A673 (cell line): ENCODE measurements at regions of chr1 and their contacts with region 1.

Region 1: DNA sequence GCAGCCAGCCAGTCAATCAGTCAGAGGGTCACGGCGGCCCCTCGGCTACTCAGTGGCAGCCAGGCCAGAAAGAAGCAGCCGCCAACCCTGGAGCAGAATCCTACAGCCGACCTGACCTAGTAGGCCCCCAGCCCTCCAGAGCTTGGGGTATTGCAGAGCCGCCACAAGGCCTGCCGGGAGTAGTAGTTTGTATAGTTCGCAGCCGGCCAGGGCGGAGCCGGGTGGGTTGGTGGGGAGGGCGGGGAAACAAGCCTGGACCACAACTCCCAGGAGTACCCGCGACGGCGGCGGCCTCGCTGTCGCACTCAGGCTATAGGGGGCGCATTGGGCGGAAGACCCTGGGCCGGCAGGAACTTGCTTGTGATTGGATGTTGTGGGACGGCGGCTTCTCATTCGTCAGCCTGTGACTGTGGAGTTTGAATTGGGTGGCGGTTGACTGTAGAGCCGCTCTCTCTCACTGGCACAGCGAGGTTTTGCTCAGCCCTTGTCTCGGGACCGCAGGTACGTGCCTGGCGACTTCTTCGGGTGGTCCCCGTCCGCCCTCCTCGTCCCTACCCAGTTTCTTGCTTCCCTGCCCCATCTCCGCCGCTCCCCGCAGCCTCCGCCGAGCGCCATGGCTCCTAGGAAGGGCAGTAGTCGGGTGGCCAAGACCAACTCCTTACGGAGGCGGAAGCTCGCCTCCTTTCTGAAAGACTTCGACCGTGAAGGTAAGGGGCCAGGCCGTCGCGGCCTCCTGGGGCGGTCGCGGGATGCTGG is at the start of gene CDCA8:
- DNase-seq: peak; percentile 99
- H3K4me3 ChIP-seq: peak within 1 kb of the TSS; percentile 98
- H3K27ac ChIP-seq: peak within 1 kb of the TSS; percentile 86
- H3K4me1 ChIP-seq: peaks cover 16% of the 10 kb centered on the region
- H3K27me3 ChIP-seq: no peaks in the 10 kb centered on the region
- CTCF ChIP-seq: peak; percentile 79
- total RNA-seq, gene CDCA8: 64.7 and 67.4 TPM in 2 replicates

Region 2: DNA sequence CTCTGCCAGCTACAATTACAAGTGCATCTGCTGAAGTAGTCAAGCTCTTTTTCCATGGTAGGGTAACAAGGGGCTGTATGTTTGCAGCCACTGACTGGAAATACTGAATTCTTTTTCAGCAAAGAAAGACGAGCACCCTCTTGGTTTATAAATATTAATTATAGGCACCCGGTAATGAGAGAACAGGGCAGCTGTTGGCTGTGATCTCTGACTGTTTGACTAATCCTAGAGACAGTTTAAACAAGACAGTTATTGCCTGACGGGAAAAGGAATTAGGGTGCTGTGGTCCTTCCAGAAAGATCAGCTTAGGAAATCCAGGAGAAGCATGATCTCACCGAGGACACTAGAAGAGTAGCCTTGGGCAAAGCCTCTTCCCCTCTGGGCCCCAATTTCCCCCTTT is 401.5 kb before region 1 on chr1:
- CTCF ChIA-PET with region 1: no interaction called
- POLR2A ChIA-PET with region 1: interaction called, 15 read pairs
- intact Hi-C with region 1: no loop called
- DNase-seq: no peak
- H3K4me3 ChIP-seq: no peak overlapping the region
- H3K27ac ChIP-seq: no peak overlapping the region
- H3K4me1 ChIP-seq: no peaks in the 10 kb centered on the region
- H3K27me3 ChIP-seq: peaks cover 34% of the 10 kb centered on the region
- CTCF ChIP-seq: no peak

Region 3: DNA sequence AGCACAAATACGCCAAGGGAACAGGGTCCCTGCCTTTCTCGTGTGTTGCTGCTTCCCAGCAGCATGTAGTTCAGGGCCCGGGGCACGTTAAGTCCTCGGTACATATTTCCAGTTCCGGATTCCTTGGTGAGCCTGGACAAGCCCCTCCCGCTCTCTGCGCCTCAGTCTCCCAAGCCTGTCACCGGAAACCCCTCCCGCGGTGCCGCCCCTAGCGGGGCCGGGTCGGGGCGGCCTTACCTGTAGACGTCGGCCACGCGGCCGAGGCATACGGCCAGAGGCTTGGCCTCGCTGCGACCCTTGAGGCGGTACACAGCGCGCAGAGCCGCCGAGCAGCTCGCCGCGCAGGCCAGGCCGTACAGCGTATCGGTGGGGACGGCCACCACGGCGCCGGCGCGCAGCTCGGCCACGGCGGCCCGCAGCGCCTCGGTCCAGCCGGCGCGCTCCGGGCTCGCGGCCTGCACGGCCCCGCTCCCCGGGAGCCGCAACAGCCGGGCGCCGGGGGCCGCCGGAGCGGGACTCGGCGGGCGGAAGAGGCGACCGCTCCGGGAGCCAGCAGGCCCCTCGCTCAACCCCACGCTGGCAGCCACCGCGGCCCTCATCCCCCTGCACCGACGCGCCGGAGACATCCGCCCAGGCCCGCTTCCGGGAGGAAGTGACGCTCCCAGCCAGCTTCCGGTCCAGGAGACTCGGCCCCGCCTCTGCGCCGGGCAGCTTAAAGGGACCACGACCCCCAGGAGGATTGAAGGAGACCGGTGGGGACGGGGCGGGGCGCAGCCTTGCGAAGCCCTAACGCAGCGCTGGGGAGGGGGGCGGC is 115.5 kb after region 1 on chr1 and contains the starts of genes C1orf122 and YRDC:
- CTCF ChIA-PET with region 1: no interaction called
- POLR2A ChIA-PET with region 1: no interaction called
- intact Hi-C with region 1: loop called (anchors 10 kb)
- DNase-seq: peak; percentile 98
- H3K4me3 ChIP-seq: peak within 1 kb of the TSS; percentile 80
- H3K27ac ChIP-seq: peak within 1 kb of the TSS; percentile 86
- H3K4me1 ChIP-seq: peaks cover 15% of the 10 kb centered on the region
- H3K27me3 ChIP-seq: no peaks in the 10 kb centered on the region
- CTCF ChIP-seq: no peak
- total RNA-seq, gene C1orf122: 31.0 and 33.5 TPM in 2 replicates
- total RNA-seq, gene YRDC: 30.4 and 38.5 TPM in 2 replicates

Region 4: DNA sequence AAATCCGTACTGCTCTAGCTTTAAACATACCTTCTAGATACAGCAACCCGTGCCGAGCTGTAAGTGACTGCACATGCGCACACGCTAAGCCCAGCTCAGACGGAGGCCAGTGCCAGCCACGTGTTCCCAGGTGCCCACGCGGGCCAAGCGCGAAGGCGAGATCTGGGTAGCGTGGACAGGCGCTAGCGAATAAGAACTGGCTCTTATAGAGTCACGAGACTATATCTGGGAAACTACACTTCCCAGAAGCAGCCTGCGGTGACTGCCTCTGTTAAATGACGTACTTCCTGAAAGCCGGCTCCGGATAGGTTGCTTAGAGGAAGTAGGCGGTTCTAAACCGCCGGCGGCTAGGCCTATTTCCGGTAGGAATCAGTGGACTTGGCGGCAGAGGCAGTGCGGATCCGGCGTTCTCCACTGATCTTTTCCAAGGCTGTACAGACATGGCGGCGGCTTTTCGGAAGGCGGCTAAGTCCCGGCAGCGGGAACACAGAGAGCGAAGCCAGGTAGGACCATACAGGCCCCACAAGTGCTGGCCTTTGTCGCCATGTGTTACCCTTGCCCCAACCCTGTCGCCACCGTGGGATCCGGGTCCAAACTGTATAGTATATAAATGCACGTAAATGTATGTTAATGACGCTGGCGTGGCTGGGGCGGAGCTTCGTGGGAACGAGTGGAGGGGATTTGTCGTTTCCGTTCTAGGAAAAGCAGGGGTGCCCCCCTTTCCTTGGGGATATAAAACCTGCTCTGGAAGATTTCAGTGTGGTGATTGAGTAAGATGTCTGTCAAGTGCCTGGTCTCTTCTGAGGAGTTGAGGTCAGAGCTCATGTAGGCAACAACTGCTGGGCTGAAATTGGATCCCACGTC is 320.3 kb after region 1 on chr1 and contains the start of gene UTP11:
- CTCF ChIA-PET with region 1: no interaction called
- POLR2A ChIA-PET with region 1: no interaction called
- intact Hi-C with region 1: loop called (anchors 10 kb)
- DNase-seq: peak; percentile 99
- H3K4me3 ChIP-seq: peak within 1 kb of the TSS; percentile 57
- H3K27ac ChIP-seq: peak within 1 kb of the TSS; percentile 95
- H3K4me1 ChIP-seq: peaks cover 41% of the 10 kb centered on the region
- H3K27me3 ChIP-seq: no peaks in the 10 kb centered on the region
- CTCF ChIP-seq: no peak
- total RNA-seq, gene UTP11: 109 and 113 TPM in 2 replicates